Transverse colon (tissue), 4 donors: ENCODE measurements at regions of chr15 and their contacts with region 1.

Region 1: GRCh38 chr15:65980824-65981456 is 111.6 kb downstream of the RAB11A start:
- DNase-seq: peak; percentile 71
- H3K4me3 ChIP-seq: no peak overlapping the region
- H3K27ac ChIP-seq: no peak overlapping the region
- H3K4me1 ChIP-seq: peaks cover 5 to 16% (median 11%) of the 10 kb centered on the region in 4 donors
- H3K27me3 ChIP-seq: peaks cover 31% of the 10 kb centered on the region
- CTCF ChIP-seq: peak; percentile 61 to 88 (median 78)
- EP300 ChIP-seq: no peak
- POLR2A ChIP-seq: no peak

Region 2: GRCh38 chr15:66188464-66188863 is 207.5 kb after region 1 on chr15:
- in situ Hi-C with region 1: loop called in 3 of 4 experiments (anchors 25 kb)
- intact Hi-C with region 1: no loop called
- DNase-seq: no peak
- H3K4me3 ChIP-seq: no peak overlapping the region
- H3K27ac ChIP-seq: no peak overlapping the region
- H3K4me1 ChIP-seq: no peaks in the 10 kb centered on the region
- H3K27me3 ChIP-seq: peaks cover 6% of the 10 kb centered on the region
- CTCF ChIP-seq: no peak
- EP300 ChIP-seq: no peak
- POLR2A ChIP-seq: no peak